ENCODE measurements at regions of chr9 and their contacts with region 1.

Region 1: GRCh38 chr9:130343445-130343918 is 77.9 kb downstream of the HMCN2 start:
- DNase-seq: peak in 1 of 3 donors; percentile 56
- ATAC-seq: peak; percentile 16 to 63 (median 43)
- H3K4me3 ChIP-seq: no peak overlapping the region
- H3K27ac ChIP-seq: no peak overlapping the region
- H3K4me1 ChIP-seq: no peaks in the 10 kb centered on the region
- H3K27me3 ChIP-seq: no peaks in the 10 kb centered on the region
- CTCF ChIP-seq: peak; percentile 65 to 77 (median 74)
- POLR2A ChIP-seq: no peak

Region 2: DNA sequence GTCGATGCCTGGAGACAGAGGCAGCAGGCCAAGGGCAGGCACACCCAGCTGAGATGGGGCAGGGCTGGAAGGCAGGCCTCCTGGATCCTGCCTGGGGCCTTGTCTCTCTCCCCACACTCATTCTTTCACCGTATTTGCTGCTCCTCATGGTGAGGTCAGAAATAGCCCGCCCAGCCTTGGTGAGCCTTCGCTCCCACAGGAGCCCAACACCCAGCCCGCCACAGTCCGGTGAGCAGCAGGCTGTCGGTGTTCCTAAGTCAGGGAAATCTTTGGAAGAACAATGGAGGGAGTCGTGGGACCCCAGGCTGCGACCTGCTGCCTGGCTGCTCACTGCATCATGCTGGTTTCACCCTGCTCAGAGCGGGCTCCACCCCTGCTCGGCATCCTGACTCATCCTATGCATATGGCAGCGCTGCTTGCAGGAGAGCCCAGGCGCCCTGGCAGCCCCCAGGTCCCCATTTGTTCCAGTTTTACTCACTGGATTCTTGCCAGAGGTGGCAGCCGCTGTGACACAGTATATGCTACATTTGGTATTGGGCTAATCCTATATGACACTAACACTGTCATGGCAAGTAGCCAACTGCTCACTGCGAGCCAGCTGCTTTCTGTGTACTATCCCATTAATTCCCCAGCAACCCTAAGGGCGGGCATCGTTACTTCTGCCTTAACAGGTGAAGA is 224.5 kb before region 1 on chr9:
- intact Hi-C with region 1: loop called (anchors 10 kb)
- DNase-seq: no peak
- ATAC-seq: no peak
- H3K4me3 ChIP-seq: no peak overlapping the region
- H3K27ac ChIP-seq: no peak overlapping the region
- H3K4me1 ChIP-seq: no peaks in the 10 kb centered on the region
- H3K27me3 ChIP-seq: no peaks in the 10 kb centered on the region
- CTCF ChIP-seq: no peak
- POLR2A ChIP-seq: no peak

Region 3: GRCh38 chr9:130235897-130236668 is 107.4 kb before region 1 on chr9:
- intact Hi-C with region 1: loop called in 1 of 2 experiments (anchors 5 kb)
- DNase-seq: peak; percentile 53 to 71 (median 63)
- ATAC-seq: peak; percentile 18 to 47 (median 34)
- H3K4me3 ChIP-seq: no peak overlapping the region
- H3K27ac ChIP-seq: no peak overlapping the region
- H3K4me1 ChIP-seq: peaks cover 0 to 7% (median 1%) of the 10 kb centered on the region in 4 donors
- H3K27me3 ChIP-seq: no peaks in the 10 kb centered on the region
- CTCF ChIP-seq: peak; percentile 95 to 99 (median 97)
- POLR2A ChIP-seq: no peak

Region 4: GRCh38 chr9:130265431-130266235 is 77.8 kb before region 1 on chr9 and contains the start of gene HMCN2:
- intact Hi-C with region 1: loop called in 1 of 2 experiments (anchors 10 kb)
- DNase-seq: peak in 2 of 3 donors; percentile 57 to 58
- ATAC-seq: peak; percentile 38 to 53 (median 47)
- H3K4me3 ChIP-seq: peak within 1 kb of the TSS; percentile 22 to 42 (median 31)
- H3K27ac ChIP-seq: no peak within 1 kb of the TSS
- H3K4me1 ChIP-seq: peaks cover 0 to 40% (median 16%) of the 10 kb centered on the region in 4 donors
- H3K27me3 ChIP-seq: no peaks in the 10 kb centered on the region
- CTCF ChIP-seq: no peak
- POLR2A ChIP-seq: no peak
- total RNA-seq, gene HMCN2: 0.31 to 2.0 (median 1.1) TPM

Region 5: GRCh38 chr9:130426883-130427282 is 83.4 kb after region 1 on chr9:
- intact Hi-C with region 1: loop called in 1 of 2 experiments (anchors 10 kb)
- DNase-seq: no peak
- ATAC-seq: peak in 3 of 4 donors; percentile 10 to 18 (median 15)
- H3K4me3 ChIP-seq: no peak overlapping the region
- H3K27ac ChIP-seq: no peak overlapping the region
- H3K4me1 ChIP-seq: peaks cover 0 to 4% (median 0%) of the 10 kb centered on the region in 4 donors
- H3K27me3 ChIP-seq: no peaks in the 10 kb centered on the region
- CTCF ChIP-seq: no peak
- POLR2A ChIP-seq: no peak

Measured in right lobe of liver (tissue), 6 donors.